Left cardiac atrium (tissue), 4 donors: ENCODE measurements at regions of chr10 and their contacts with region 1.

Region 1: DNA sequence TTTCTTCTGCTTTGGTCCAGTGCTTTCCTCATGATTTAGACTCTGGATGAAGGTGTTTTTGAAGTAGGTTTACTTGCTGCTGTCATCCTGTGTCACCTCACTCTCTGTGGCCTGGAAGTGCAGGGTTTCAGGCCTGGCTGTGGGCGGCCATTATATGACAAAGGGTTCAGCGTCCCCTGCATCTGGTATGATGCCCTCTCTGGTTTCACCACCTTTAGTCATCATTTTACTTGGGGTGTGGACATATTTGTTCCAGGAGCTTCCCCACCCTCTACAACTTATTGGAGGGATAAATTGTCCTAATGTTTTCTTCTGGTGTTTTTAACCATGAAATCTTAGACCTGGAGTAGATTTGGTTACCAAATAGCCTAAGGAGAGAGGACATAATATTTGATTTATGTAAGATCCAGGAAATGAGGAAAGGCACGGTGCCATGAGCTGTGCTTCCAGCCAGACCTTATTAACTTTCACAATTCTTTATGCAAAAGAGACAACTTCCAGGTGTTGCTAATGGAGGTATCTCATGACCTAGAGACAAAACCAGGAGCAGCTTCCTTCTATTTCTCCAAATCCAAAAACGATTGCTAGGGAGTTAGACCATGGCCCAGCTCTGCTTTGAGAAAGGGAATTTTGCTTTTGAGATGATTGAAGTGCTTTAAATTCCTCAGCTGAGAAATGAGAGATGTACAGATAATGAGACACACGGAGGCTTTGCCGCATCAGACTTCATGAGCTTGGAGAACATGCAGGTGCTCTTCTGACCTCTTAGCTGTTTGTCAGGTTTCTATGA is 20.8 kb downstream of the WBP1L start:
- DNase-seq: no peak
- ATAC-seq: no peak

Region 2: GRCh38 chr10:102476466-102477141 is 288.0 kb before region 1 on chr10:
- intact Hi-C with region 1: no loop called
- DNase-seq: no peak
- ATAC-seq: no peak

Region 3: GRCh38 chr10:102802920-102803534 is 38.4 kb after region 1 on chr10:
- intact Hi-C with region 1: loop called in 1 of 2 experiments (anchors 5 kb)
- DNase-seq: peak; percentile 77
- ATAC-seq: peak; percentile 66 to 78

Region 4: DNA sequence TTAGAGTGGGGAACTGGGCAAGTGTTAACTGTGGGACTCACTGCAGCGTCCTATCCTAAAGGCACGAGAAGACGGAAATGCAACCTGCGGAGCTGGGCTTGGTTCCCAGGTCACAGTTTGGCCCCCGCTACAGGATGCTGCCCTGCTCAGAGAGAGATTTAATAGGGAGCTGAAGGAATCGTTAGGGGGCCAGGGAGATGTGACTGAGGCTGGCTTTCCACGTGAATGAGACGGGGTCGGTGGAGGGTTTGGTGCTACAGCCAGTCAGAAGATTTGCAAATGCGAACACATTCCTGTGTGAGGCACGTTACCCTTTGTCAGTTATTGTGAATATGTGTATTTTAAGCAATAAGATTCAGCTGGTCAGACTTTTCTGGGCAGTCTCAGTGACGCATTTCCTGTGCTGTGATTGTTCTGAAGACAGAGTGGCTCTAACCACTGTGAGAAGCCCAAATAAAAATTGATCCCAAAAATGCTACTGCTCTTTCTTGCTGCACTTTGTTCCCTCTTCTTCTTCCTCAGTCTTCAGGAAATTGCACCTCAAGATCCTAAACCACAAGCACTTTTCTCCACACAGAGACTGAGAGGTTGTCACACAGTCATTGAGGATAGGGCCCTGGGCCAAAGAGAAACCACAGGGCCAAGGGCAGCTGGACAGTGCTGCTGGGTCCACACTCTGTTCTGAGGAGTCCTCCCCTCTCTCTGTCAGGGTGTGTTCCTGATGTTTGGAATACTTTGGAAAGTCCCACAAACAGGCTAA is 51.4 kb after region 1 on chr10:
- intact Hi-C with region 1: no loop called
- DNase-seq: peak; percentile 57
- ATAC-seq: peak; percentile 70 to 77

Region 5: DNA sequence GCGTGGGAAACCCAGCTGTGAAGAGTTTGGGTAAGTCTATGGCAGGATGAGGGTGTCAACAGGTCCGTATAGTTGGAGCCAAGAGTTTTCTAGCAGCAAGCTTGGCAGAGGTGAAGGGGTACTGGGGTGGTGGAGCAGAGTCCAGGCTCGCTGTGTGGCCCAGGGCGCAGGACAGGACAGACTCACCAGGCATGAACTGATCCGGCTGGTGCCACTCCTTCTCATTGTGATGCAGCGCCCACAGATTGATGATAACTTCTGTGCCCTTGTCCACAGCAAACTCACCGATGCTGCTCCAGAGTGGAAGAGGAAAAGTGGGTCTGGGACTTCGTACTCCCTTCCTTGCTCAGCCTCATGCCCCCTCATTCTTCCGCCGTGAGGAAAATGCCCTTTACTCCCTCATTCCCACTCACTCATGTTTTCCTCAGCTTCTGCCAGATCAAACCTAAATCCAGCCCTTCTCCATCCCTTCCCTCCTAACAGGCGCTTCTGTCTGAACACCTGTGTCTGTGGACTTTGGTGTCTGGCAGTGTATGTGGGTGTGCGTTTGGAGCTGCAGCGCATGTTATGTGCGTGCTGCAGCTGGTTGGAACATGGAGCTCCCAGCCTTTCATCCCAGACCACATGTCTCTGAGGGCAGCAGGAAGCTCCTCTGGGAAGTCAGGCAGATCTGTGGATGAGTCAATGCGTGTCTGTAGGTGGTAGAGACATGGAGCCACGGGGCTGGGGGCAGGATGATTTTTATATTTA is 66.9 kb after region 1 on chr10:
- intact Hi-C with region 1: no loop called
- DNase-seq: no peak
- ATAC-seq: no peak